ENCODE measurements at regions of chr19 and their contacts with region 1.

Region 1: DNA sequence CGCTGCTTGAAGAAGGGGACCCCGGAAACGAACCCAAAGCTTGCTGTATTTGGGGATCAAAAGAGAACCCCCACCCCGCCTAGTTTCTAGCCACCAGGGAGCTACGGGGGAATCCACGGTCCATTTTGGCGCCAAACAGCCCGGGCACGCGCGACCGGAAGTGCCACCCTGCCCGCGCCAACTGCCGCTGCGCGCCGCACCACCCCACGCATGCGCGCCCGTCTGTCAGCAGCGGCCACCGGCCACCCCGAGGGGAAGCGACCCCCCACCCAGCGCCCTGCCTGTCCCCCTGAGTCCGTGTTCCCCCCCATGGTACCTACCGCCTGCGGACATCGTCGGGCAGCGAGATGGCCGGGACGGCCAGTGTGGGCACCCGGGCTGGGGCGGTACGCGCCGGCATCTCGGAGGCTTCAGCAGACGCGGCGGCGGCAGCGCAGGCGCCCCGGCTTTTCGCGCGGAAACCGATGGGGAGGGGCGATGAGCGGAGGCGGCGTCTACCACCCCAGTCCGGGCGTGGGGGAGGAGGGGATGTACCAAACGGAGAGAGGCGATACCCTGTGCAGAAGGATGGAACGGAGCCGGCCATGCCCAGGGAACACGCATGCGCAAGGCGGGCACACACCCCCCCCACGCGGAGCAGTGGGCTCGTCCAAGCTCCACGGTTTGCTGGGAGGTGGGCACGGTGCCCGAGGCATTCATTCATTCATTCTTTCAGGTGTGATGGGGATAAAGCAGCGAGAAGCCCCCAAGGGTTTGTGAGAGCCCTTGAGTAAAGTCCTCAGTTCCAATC is at the start of gene DNMT1:
- DNase-seq: peak; percentile 99
- ATAC-seq: peak; percentile 97
- H3K4me3 Mint-ChIP-seq: peak within 1 kb of the TSS; percentile 89
- H3K27ac Mint-ChIP-seq: peak within 1 kb of the TSS; percentile 97
- H3K4me1 Mint-ChIP-seq: peaks cover 50% of the 10 kb centered on the region
- H3K27me3 Mint-ChIP-seq: no peaks in the 10 kb centered on the region
- total RNA-seq, gene DNMT1: 408 to 412 TPM

Region 2: DNA sequence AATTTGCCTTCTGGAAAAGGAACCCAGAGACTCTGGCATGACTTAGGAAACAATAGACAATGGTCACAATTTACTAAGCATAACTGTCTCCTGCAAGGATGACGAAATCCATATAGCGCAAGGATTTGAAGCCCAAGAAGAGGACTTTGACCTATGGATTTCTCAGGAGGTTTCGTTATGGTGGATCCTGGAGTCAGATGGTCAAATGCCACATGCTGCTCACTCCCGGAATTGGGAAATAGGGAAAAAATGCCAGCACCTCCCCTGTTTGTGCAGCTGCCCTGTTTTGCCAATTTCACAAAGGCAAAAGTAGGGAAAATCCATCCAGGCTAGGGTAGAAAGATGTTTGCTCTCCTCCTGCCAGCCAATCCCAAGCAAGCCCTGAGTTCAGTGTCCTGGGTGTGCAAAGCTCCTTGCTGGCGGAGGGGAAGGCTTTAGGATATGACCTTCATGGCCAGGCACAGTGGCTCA is 158.1 kb before region 1 on chr19:
- CTCF ChIA-PET with region 1: no interaction called
- POLR2A ChIA-PET with region 1: no interaction called
- DNase-seq: no peak
- ATAC-seq: no peak
- H3K4me3 Mint-ChIP-seq: no peak overlapping the region
- H3K27ac Mint-ChIP-seq: no peak overlapping the region
- H3K4me1 Mint-ChIP-seq: no peaks in the 10 kb centered on the region
- H3K27me3 Mint-ChIP-seq: peaks cover 9% of the 10 kb centered on the region

Region 3: DNA sequence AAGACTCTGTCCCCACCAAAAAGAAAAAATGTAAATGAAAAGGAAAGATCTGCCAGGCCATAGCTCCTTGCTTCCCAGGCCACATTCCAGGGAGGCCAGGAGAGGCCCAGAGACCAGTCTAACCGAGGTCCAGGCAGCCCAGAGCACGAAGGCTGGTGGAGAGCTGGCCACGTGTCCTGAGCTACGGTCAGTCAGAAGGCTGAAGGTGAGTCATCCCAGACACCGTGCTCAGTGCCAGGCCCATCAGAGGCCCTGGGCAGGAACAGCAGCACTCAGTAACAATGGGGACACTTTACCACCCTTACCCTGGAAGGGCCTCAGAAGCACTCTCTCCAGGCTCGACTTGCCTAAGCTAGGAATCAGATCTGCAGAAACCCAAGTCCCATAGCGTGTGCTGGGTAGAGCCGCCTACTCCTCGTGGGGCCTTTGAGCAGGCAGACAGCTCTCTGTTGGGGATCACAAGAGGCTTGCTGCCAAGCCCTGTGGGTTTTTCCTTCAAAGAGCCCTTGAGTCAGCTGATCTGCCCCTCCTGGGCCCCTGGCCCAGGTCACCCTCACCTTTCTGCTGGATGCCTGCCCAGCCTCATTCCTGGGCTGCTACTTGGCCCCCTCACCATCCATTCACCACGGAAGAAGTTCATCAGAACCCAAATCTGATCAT is 11.7 kb after region 1 on chr19:
- CTCF ChIA-PET with region 1: interaction called, 4 read pairs
- POLR2A ChIA-PET with region 1: interaction called, 10 read pairs
- DNase-seq: no peak
- ATAC-seq: no peak
- H3K4me3 Mint-ChIP-seq: no peak overlapping the region
- H3K27ac Mint-ChIP-seq: no peak overlapping the region
- H3K4me1 Mint-ChIP-seq: peaks cover 5% of the 10 kb centered on the region
- H3K27me3 Mint-ChIP-seq: peaks cover 4% of the 10 kb centered on the region

Region 4: GRCh38 chr19:10279737-10280442 is 85.2 kb after region 1 on chr19:
- CTCF ChIA-PET with region 1: no interaction called
- POLR2A ChIA-PET with region 1: no interaction called
- DNase-seq: peak; percentile 44
- ATAC-seq: peak; percentile 60
- H3K4me3 Mint-ChIP-seq: no peak overlapping the region
- H3K27ac Mint-ChIP-seq: peak overlapping the region; percentile 58
- H3K4me1 Mint-ChIP-seq: peaks cover 31% of the 10 kb centered on the region
- H3K27me3 Mint-ChIP-seq: no peaks in the 10 kb centered on the region